Ascending aorta (tissue), 2 donors: ENCODE measurements at regions of chr19 and their contacts with region 1.

Region 1: DNA sequence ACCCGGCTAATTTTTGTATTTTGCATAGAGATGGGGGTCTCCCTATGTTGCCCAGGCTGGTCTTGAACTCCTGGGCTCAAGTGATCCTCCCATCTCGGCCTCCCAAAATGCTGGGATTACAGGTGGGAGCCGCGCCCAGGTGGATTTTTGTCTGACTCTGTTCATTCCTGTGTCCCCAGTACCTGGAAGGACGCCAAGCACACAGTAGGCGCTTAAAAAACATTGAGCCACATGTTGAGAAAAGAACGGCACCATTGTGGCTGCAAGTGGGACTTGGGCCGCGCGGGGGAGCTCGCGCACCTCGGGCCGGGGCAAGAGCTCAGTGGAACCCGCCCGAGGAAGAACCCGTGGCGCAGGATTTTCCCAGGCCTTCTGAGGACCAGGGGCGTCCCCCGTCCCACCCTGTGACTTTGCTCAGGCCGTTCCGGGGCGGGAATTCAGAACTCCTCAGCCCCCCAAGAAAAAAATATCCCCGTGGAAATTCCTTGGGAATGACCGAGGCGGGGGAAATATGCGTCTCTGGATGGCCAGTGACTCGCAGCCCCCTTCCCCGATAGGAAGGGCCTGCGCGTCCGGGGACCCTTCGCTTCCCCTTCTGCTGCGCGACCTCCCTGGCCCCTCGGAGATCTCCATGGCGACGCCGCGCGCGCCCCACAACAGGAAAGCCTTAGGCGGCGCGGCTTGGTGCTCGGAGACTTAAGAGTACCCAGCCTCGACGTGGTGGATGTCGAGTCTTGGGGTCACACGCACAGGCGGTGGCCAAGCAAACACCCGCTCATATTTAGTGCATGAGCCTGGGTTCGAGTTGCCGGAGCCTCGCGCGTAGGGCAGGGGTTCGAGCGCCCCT is 1.4 kb upstream of the ICAM1 start:
- DNase-seq: peak; percentile 47 to 92
- H3K4me3 ChIP-seq: peak overlapping the region; percentile 50 to 59
- H3K27ac ChIP-seq: peak overlapping the region; percentile 69 to 81
- H3K4me1 ChIP-seq: peaks cover 7 to 15% of the 10 kb centered on the region in 2 donors
- H3K27me3 ChIP-seq: no peaks in the 10 kb centered on the region
- CTCF ChIP-seq: peak; percentile 93 to 99 (median 95)

Region 2: DNA sequence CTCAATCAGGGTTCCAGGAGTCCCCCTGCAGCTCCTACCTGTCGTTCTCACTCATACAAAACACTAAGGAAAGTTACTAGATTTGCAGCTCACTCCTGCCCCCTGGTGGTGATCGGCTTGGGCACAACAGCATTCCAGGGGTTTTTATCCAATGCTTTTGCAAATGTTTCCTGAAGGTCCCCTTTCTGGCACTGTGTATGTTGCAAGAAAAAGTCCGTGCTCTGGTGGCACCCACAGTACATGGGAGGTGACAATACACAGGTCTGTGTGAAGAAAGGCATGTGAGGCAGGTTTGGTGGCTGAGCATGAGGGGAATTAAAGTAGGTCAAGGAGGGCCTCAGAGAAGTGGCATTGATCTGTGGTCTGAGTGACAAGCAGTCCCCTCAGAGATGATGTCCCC is 119.4 kb after region 1 on chr19:
- intact Hi-C with region 1: loop called (anchors 1 kb)
- DNase-seq: peak in 1 of 2 donors; percentile 94
- H3K4me3 ChIP-seq: no peak overlapping the region
- H3K27ac ChIP-seq: no peak overlapping the region
- H3K4me1 ChIP-seq: no peaks in the 10 kb centered on the region
- H3K27me3 ChIP-seq: no peaks in the 10 kb centered on the region
- CTCF ChIP-seq: peak; percentile 83 to 92 (median 88)